Activated naive CD4-positive, alpha-beta T cell treated with anti-CD3 and anti-CD28 coated beads for 36 hours (primary cell): ENCODE measurements at regions of chr1 and their contacts with region 1.

Region 1: GRCh38 chr1:240732390-240732789 is 120.4 kb upstream of the GREM2 start:
- DNase-seq: no peak
- H3K4me3 Mint-ChIP-seq: no peak overlapping the region
- H3K27ac Mint-ChIP-seq: no peak overlapping the region
- H3K4me1 Mint-ChIP-seq: no peaks in the 10 kb centered on the region
- H3K27me3 Mint-ChIP-seq: peaks cover 4% of the 10 kb centered on the region

Region 2: GRCh38 chr1:240498992-240499391 is 233.4 kb before region 1 on chr1:
- CTCF ChIA-PET with region 1: no interaction called
- intact Hi-C with region 1: no loop called
- DNase-seq: no peak
- H3K4me3 Mint-ChIP-seq: no peak overlapping the region
- H3K27ac Mint-ChIP-seq: no peak overlapping the region
- H3K4me1 Mint-ChIP-seq: no peaks in the 10 kb centered on the region
- H3K27me3 Mint-ChIP-seq: no peaks in the 10 kb centered on the region

Region 3: GRCh38 chr1:240663160-240663879 is 69.1 kb before region 1 on chr1:
- CTCF ChIA-PET with region 1: no interaction called
- intact Hi-C with region 1: no loop called
- DNase-seq: no peak
- H3K4me3 Mint-ChIP-seq: no peak overlapping the region
- H3K27ac Mint-ChIP-seq: no peak overlapping the region
- H3K4me1 Mint-ChIP-seq: peaks cover 13% of the 10 kb centered on the region
- H3K27me3 Mint-ChIP-seq: no peaks in the 10 kb centered on the region

Region 4: DNA sequence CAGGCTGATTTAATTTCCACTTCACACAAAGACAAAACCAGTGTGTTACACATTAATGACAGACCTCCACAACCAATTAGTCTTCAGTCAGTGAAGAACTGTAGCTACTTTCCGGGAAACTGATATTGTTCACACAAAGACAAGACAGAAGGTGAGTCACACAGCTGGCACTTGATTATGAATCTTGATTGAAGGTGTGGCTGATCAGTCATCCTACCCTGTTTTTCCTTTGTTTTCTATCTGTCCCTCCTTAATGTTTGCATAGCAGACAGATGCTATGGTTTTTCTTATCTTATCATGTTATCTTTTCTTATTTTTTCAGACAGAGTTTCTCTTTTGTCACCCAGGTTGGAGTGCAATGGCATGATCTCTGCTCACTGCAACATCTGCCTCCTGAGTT is 64.7 kb after region 1 on chr1:
- CTCF ChIA-PET with region 1: no interaction called
- intact Hi-C with region 1: no loop called
- DNase-seq: no peak
- H3K4me3 Mint-ChIP-seq: no peak overlapping the region
- H3K27ac Mint-ChIP-seq: no peak overlapping the region
- H3K4me1 Mint-ChIP-seq: no peaks in the 10 kb centered on the region
- H3K27me3 Mint-ChIP-seq: no peaks in the 10 kb centered on the region

Region 5: DNA sequence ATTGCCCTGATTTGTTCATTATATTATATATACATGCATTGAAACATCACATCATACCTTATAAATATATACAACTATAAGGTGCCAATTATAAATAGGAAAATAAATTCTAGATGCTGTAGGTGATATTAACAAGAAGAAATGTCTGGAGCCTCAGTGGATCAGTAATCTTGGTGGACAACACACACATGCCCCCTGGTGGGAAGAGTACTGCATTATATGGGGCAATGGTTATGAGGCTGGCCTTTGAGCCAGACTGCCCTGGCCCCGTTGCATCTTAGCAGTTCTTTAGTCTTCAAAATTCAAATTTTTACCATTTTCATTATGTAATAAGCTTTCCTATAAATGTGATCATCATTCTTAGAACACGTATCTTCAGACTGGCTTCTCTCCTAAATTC is 214.5 kb after region 1 on chr1:
- CTCF ChIA-PET with region 1: interaction called, 3 read pairs
- intact Hi-C with region 1: loop called (anchors 1 kb)
- DNase-seq: peak; percentile 29
- H3K4me3 Mint-ChIP-seq: no peak overlapping the region
- H3K27ac Mint-ChIP-seq: no peak overlapping the region
- H3K4me1 Mint-ChIP-seq: no peaks in the 10 kb centered on the region
- H3K27me3 Mint-ChIP-seq: no peaks in the 10 kb centered on the region

Region 6: DNA sequence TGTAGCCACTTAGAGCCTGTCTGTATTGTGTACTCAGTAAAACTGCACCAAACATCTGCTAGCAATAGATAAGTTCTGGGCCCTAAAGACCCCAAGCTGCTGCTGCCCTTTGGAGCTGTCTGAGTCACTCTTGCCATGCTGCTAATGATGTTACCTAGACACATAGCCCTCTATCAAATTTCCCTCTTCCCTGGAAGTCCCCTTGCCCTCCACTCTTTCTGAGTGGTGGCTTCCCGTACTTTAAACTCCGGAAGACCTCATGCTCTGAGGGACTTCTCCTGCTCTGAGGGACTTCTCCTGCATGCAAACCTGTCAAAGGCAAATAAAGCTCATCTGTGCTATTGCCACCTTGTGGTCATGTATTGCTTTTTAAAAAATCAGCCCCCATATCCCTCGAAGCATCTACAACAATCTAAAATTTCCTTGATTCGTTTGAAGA is 753.2 kb after region 1 on chr1:
- CTCF ChIA-PET with region 1: interaction called, 9 read pairs
- intact Hi-C with region 1: loop called (anchors 5 kb)
- DNase-seq: no peak
- H3K4me3 Mint-ChIP-seq: no peak overlapping the region
- H3K27ac Mint-ChIP-seq: no peak overlapping the region
- H3K4me1 Mint-ChIP-seq: peaks cover 17% of the 10 kb centered on the region
- H3K27me3 Mint-ChIP-seq: peaks cover 5% of the 10 kb centered on the region

Region 7: DNA sequence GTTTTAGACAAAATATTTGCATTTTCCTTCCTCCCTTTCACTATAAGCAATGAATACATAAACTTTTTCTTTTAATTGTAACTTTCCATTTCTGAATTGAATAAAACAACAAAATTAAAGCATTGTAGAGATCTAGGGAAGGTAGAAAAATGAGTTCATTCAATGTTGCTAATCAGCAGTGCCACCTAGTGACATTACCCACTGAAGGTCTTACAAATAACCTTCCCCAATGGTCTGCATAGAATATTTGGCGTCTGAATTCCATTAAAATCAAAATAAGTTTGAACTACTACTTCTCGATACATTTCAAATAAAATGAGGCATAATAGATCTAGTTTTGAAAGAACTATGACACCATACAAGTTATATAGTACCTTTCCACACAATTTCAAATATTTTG is 767.5 kb after region 1 on chr1:
- CTCF ChIA-PET with region 1: no interaction called
- intact Hi-C with region 1: loop called (anchors 1 kb)
- DNase-seq: no peak
- H3K4me3 Mint-ChIP-seq: no peak overlapping the region
- H3K27ac Mint-ChIP-seq: no peak overlapping the region
- H3K4me1 Mint-ChIP-seq: peaks cover 3% of the 10 kb centered on the region
- H3K27me3 Mint-ChIP-seq: no peaks in the 10 kb centered on the region

Region 8: DNA sequence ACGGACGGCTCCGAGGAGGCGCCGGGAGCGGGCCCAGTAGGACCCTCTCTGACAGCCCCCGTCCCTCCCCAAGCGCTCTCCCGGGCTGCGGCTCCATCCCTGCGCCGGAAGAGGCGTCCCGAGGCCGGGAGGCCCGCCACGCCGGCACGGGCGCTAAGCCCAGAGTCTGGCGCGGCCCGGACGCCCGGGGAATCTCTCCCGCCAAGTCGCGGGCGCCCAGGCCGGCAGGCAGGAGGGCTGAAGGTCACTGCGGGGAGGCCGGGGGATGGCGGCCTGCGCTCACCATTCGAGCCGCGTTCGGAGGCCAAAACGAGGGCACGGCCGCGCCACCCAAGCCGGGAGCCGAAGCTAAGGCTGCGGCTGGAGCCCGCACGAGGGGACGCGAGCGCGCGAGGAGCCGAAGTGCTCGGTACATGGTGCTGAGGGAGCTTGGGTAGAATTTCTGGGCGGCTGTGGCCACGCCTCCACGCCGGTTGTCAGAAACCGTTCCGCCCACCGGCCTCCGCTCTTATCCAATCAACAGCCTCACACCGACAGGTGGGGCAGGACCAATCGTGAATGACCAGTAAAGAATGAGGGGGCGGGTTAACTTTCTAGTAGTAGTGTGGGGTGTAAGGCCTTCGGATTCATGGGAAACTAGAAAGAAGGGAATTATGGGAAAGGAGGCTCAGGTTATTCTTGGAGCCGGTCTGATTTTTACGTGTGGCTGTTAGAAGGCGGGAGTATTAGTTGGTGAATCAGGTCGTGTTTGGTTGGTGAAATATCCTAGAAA is 787.1 kb after region 1 on chr1 and contains the start of gene FH:
- CTCF ChIA-PET with region 1: no interaction called
- intact Hi-C with region 1: no loop called
- DNase-seq: peak; percentile 97
- H3K4me3 Mint-ChIP-seq: peak within 1 kb of the TSS; percentile 89
- H3K27ac Mint-ChIP-seq: peak within 1 kb of the TSS; percentile 77
- H3K4me1 Mint-ChIP-seq: peaks cover 11% of the 10 kb centered on the region
- H3K27me3 Mint-ChIP-seq: peaks cover 11% of the 10 kb centered on the region
- total RNA-seq, gene FH: 91.6 to 95.4 TPM

Region 9: DNA sequence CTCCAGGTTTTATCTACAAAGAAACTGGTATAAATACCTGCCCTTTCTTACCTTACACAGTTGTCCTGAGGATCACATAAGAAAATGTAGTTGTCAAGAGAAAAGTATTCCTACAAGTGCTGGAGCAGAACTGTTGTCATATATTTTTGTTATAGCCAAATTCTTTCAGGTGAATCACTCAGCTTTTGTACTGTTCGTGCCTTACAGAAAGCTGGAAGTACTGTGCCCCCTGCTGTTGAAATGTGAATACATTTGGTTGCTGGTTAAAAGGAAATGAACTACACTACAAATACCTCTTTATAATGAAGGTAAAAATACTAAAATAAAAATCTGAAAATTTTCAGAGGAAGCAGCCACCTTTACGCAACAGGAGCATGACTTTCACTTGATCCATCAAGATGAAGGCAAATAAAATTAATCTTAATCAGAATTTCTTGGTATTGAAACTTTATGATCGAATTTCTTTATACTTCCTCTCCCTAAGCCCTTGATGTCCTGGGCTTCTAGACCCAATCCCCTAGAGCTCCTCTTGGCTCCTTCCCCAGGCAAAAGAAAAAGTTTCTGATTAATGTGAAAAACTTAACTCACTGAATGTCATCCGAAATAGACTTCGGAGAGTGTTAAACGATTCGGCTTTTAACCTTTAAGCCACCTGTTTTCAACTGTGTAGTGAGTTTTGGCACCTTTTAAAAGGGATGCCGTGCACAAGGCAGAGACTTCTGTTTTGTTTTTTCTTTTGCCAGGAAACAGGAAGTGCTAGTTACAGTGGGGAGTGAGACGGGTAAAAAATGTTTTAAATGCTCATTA is 895.3 kb after region 1 on chr1:
- CTCF ChIA-PET with region 1: no interaction called
- intact Hi-C with region 1: loop called (anchors 10 kb)
- DNase-seq: peak; percentile 69
- H3K4me3 Mint-ChIP-seq: peak overlapping the region; percentile 49
- H3K27ac Mint-ChIP-seq: peak overlapping the region; percentile 79
- H3K4me1 Mint-ChIP-seq: peaks cover 31% of the 10 kb centered on the region
- H3K27me3 Mint-ChIP-seq: no peaks in the 10 kb centered on the region